A549 (cell line): ENCODE measurements at regions of chr17 and their contacts with region 1.

Region 1: DNA sequence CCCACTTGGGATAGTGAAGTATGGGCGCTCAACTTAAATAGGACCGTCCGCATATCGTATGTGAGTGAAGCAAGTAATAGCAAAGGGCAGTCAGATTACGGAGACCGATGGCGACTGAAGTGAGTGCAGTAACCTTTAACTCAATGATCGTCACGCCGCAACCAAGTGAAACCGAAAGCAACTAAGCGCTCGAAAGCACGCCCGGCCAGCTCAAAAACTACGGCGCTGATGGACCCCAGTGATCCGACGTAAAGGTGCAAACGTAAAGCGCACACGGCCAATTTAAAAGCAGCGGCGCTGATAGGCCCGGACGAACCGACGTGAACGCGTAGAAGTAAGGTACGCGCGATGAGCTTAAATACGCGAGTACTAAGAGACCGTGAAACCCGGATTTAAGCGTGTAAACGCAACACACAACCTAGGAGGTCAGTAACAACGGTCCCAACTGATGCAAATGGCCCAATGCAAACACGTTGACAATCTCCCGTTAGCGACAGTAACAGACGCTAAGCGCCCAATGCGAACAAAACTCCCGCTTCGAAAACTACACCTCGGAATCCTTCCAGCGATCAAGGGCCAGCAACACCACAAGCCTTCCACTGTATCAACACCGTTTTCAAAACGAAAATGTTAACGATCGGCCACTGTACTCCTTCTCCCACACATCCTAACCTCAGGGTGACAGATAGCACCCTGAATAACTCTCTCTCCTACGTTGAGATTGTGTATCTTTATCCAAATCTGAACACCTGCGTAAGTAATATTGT is 37.9 kb upstream of the ARL4D start:
- DNase-seq: peak; percentile 98 to 100
- ATAC-seq: peak; percentile 87 to 92
- H3K4me3 ChIP-seq: peak overlapping the region; percentile 62
- H3K27ac ChIP-seq: peak overlapping the region; percentile 88 to 91
- H3K4me1 ChIP-seq: peaks cover 28% of the 10 kb centered on the region
- CTCF ChIP-seq: no peak
- EP300 ChIP-seq: peak in 1 of 2 experiments; percentile 46; a peak in 2 of 5 replicates
- POLR2A ChIP-seq: peak; percentile 100
- RAD21 ChIP-seq: peak in 1 of 2 experiments; percentile 32; a peak in 1 of 5 replicates

Region 2: GRCh38 chr17:43104665-43105064 is 256.3 kb before region 1 on chr17:
- CTCF ChIA-PET with region 1: no interaction called
- POLR2A ChIA-PET with region 1: no interaction called
- DNase-seq: no peak
- ATAC-seq: no peak
- H3K4me3 ChIP-seq: no peak overlapping the region
- H3K27ac ChIP-seq: no peak overlapping the region
- H3K4me1 ChIP-seq: no peaks in the 10 kb centered on the region
- CTCF ChIP-seq: no peak
- EP300 ChIP-seq: no peak
- POLR2A ChIP-seq: no peak
- RAD21 ChIP-seq: no peak

Region 3: GRCh38 chr17:43125133-43125966 is 235.6 kb before region 1 on chr17 and contains the start of gene BRCA1:
- CTCF ChIA-PET with region 1: no interaction called
- POLR2A ChIA-PET with region 1: interaction called, 14 read pairs
- DNase-seq: peak; percentile 100
- ATAC-seq: peak; percentile 97 to 98
- H3K4me3 ChIP-seq: peak within 1 kb of the TSS; percentile 78
- H3K27ac ChIP-seq: peak within 1 kb of the TSS; percentile 90
- H3K4me1 ChIP-seq: peaks cover 15% of the 10 kb centered on the region
- CTCF ChIP-seq: no peak
- EP300 ChIP-seq: no peak
- POLR2A ChIP-seq: peak; percentile 37
- RAD21 ChIP-seq: no peak
- polyA plus RNA-seq, gene BRCA1: 62.5 and 71.8 TPM in 2 replicates

Region 4: GRCh38 chr17:43330876-43331639 is 29.9 kb before region 1 on chr17:
- CTCF ChIA-PET with region 1: interaction called, 89 read pairs
- POLR2A ChIA-PET with region 1: interaction called, 21 read pairs
- DNase-seq: peak in 1 of 2 experiments; percentile 58
- ATAC-seq: 0 out of 6 replicates have a peak, but pooled peaks of 1 of the 2 experiments have one; percentile 22
- H3K4me3 ChIP-seq: no peak overlapping the region
- H3K27ac ChIP-seq: no peak overlapping the region
- H3K4me1 ChIP-seq: peaks cover 4% of the 10 kb centered on the region; the same call in 1 of the 3 replicates
- CTCF ChIP-seq: no peak
- EP300 ChIP-seq: no peak
- POLR2A ChIP-seq: no peak
- RAD21 ChIP-seq: no peak

Region 5: DNA sequence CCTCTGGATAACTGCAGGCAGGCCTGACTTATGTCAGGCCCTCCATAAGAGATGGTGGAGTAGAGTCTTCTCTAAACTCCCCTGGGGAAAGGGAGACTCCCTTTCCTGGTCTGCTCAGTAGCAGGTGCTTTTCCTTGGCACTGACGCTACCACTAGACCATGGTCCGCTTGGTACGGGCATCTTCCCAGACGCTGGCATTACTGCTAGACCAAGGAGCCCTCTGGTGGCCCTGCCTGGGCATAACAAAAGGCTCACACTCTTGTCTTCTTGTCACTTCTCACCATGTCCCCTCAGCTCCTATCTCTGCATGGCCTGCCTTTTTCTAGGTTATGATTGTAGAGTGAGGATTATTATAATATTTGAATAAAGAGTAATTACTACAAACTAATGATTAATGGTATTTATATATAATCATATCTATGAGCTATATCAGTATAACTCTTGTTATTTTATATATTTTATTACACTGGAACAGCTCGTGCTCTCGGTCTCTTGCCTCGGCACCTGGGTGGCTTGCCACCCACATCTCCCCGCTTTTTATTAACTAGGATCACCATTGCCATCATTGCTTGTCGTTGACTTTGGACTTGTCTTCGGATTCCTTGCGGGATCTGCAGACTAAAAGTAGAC is 21.9 kb before region 1 on chr17:
- CTCF ChIA-PET with region 1: interaction called, 89 read pairs
- POLR2A ChIA-PET with region 1: interaction called, 21 read pairs
- DNase-seq: peak in 1 of 2 experiments; percentile 83
- ATAC-seq: peak; percentile 41 to 74; a peak in 4 of 6 replicates
- H3K4me3 ChIP-seq: no peak overlapping the region
- H3K27ac ChIP-seq: no peak overlapping the region
- H3K4me1 ChIP-seq: peaks cover 11% of the 10 kb centered on the region
- CTCF ChIP-seq: peak; percentile 81
- EP300 ChIP-seq: no peak
- POLR2A ChIP-seq: no peak
- RAD21 ChIP-seq: peak; percentile 79 to 83